Gastrocnemius medialis (tissue), 4 donors: ENCODE measurements at regions of chr11 and their contacts with region 1.

Region 1: DNA sequence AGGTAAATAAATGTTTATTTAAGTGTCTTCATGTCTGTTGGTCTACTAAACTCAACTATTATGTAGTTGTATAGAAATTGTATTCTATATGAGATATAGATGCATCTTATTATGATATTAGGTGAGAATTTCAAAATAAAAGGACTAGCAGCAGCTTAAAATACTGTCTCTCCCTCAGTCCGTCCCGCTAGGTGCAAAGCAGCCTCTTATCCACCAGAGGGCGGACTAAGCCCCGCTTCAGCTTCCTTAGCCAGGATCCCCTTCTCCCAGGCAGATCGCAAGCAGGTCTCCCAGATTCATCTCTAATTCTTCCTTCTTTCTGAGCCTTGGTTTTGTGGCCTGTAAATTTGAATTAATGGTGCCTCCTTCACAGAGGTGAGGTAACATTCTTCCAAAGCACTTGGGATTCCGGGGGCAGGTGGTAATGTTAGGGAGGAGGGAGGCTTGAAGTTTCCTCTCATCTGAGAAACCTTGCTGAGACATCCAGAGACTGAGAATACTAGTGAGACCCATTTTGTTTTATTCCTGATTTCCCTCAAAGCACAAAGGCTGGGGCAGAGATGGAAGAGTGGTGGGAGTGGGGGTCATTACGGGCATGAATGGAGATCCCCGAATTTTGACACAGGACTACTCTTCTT is 13.5 kb upstream of the INSC start:
- DNase-seq: peak; percentile 31 to 38
- ATAC-seq: peak; percentile 75
- H3K4me3 ChIP-seq: no peak overlapping the region
- H3K27ac ChIP-seq: no peak overlapping the region
- H3K4me1 ChIP-seq: no peaks in the 10 kb centered on the region
- H3K27me3 ChIP-seq: no peaks in the 10 kb centered on the region
- CTCF ChIP-seq: peak; percentile 64 to 88 (median 72)
- POLR2A ChIP-seq: no peak

Region 2: GRCh38 chr11:15208378-15209222 is 107.4 kb after region 1 on chr11:
- in situ Hi-C with region 1: loop called (anchors 5 to 10 kb)
- intact Hi-C with region 1: loop called (anchors 1 kb)
- DNase-seq: peak; percentile 38 to 39
- ATAC-seq: peak; percentile 56 to 68
- H3K4me3 ChIP-seq: no peak overlapping the region
- H3K27ac ChIP-seq: no peak overlapping the region
- H3K4me1 ChIP-seq: no peaks in the 10 kb centered on the region
- H3K27me3 ChIP-seq: no peaks in the 10 kb centered on the region
- CTCF ChIP-seq: peak; percentile 71 to 91 (median 87)
- POLR2A ChIP-seq: no peak

Region 3: GRCh38 chr11:15213471-15214231 is 112.5 kb after region 1 on chr11:
- in situ Hi-C with region 1: loop called (anchors 5 to 10 kb)
- intact Hi-C with region 1: loop called (anchors 1 kb)
- DNase-seq: no peak
- ATAC-seq: no peak
- H3K4me3 ChIP-seq: no peak overlapping the region
- H3K27ac ChIP-seq: no peak overlapping the region
- H3K4me1 ChIP-seq: no peaks in the 10 kb centered on the region
- H3K27me3 ChIP-seq: no peaks in the 10 kb centered on the region
- CTCF ChIP-seq: no peak
- POLR2A ChIP-seq: no peak

Region 4: GRCh38 chr11:15266993-15267392 is 165.8 kb after region 1 on chr11:
- in situ Hi-C with region 1: no loop called
- intact Hi-C with region 1: no loop called
- DNase-seq: no peak
- ATAC-seq: no peak
- H3K4me3 ChIP-seq: no peak overlapping the region
- H3K27ac ChIP-seq: no peak overlapping the region
- H3K4me1 ChIP-seq: no peaks in the 10 kb centered on the region
- H3K27me3 ChIP-seq: no peaks in the 10 kb centered on the region
- CTCF ChIP-seq: no peak
- POLR2A ChIP-seq: no peak